ENCODE measurements at regions of chr2 and their contacts with region 1.

Region 1: DNA sequence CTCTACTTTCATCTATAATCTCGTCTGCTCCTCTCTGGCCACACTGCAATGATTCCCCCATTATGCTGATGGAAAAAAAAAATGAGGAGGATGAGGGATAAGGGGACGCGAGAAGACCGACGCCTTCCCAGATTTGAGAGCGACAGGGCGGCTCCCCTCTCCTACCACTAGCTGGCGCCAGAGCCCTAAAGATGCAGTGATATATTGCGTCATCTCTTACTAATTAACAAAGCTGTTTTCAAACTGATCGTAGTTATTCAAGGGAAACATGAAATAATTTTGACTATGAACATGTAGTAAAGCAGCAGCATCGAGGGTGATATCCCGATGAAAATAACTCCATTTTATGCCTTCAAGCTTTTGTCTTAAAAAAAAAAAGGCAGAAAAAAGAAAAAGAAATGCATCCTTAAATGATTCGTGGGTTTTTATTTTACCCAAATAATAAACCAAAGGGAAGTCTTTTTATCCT is 48.0 kb upstream of the HNRNPA3 start:
- DNase-seq: peak; percentile 86
- ATAC-seq: peak; percentile 66
- H3K4me3 ChIP-seq: peak overlapping the region; percentile 38 to 71 (median 50)
- H3K4me3 Mint-ChIP-seq: no peak overlapping the region
- H3K27ac ChIP-seq: peak overlapping the region; percentile 81 to 90
- H3K27ac Mint-ChIP-seq: no peak overlapping the region
- H3K4me1 ChIP-seq: peaks cover 19 to 25% of the 10 kb centered on the region in 2 donors
- H3K4me1 Mint-ChIP-seq: peaks cover 22% of the 10 kb centered on the region
- H3K27me3 ChIP-seq: no peaks in the 10 kb centered on the region
- H3K27me3 Mint-ChIP-seq: peaks cover 4% of the 10 kb centered on the region
- CTCF ChIP-seq: peak; percentile 100

Region 2: DNA sequence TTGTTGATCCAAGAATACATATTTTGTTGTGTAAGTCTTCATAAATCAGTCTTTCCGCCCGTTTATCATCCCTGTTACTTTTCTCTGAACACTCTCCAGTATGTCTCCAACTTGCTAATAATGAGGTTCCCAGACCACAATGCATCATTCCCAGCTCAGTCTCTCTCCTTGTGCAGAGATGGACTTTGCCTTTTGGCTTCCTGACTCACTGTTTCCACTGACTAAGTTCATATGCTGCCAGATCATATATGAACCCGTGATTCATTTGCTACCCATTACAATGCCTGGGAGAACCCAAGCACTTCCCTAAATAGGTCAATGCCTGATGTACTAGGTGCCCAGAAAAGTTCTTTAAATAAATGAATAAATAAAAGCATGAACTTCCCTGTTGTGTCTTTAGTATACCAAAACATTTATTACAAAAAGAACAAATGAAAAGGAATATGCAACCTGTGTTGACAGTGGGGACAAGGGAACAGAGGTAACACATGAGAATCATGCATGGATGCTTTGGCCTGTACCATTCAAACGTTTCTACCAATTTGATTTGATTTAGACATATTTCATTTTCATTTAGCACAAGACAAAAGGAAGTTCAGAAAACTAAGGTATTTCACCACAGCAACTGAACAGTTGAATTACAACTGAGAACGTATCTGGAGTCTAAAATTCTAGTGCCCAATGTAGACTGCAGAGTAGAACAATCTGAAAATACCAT is 167.4 kb before region 1 on chr2:
- CTCF ChIA-PET with region 1: no interaction called
- POLR2A ChIA-PET with region 1: no interaction called
- intact Hi-C with region 1: no loop called
- DNase-seq: peak; percentile 11
- ATAC-seq: no peak
- H3K4me3 ChIP-seq: no peak overlapping the region
- H3K4me3 Mint-ChIP-seq: peak overlapping the region; percentile 26
- H3K27ac ChIP-seq: peak overlapping the region; percentile 34 to 51
- H3K27ac Mint-ChIP-seq: no peak overlapping the region
- H3K4me1 ChIP-seq: peaks cover 8 to 13% of the 10 kb centered on the region in 2 donors
- H3K4me1 Mint-ChIP-seq: peaks cover 14% of the 10 kb centered on the region
- H3K27me3 ChIP-seq: no peaks in the 10 kb centered on the region
- H3K27me3 Mint-ChIP-seq: no peaks in the 10 kb centered on the region
- CTCF ChIP-seq: no peak

Region 3: GRCh38 chr2:177195194-177195593 is 30.6 kb after region 1 on chr2:
- CTCF ChIA-PET with region 1: interaction called, 18 read pairs
- POLR2A ChIA-PET with region 1: no interaction called
- intact Hi-C with region 1: no loop called
- DNase-seq: no peak
- ATAC-seq: no peak
- H3K4me3 ChIP-seq: no peak overlapping the region
- H3K4me3 Mint-ChIP-seq: no peak overlapping the region
- H3K27ac ChIP-seq: no peak overlapping the region
- H3K27ac Mint-ChIP-seq: no peak overlapping the region
- H3K4me1 ChIP-seq: no peaks in the 10 kb centered on the region
- H3K4me1 Mint-ChIP-seq: no peaks in the 10 kb centered on the region
- H3K27me3 ChIP-seq: no peaks in the 10 kb centered on the region
- H3K27me3 Mint-ChIP-seq: no peaks in the 10 kb centered on the region
- CTCF ChIP-seq: no peak

Region 4: GRCh38 chr2:177239932-177240630 is 75.5 kb after region 1 on chr2:
- CTCF ChIA-PET with region 1: interaction called, 12 read pairs
- POLR2A ChIA-PET with region 1: interaction called, 4 read pairs
- intact Hi-C with region 1: no loop called
- DNase-seq: peak; percentile 88
- ATAC-seq: peak; percentile 82
- H3K4me3 ChIP-seq: peak overlapping the region in 1 of 5 experiments; percentile 12
- H3K4me3 Mint-ChIP-seq: peak overlapping the region; percentile 72
- H3K27ac ChIP-seq: peak overlapping the region; percentile 59 to 60
- H3K27ac Mint-ChIP-seq: peak overlapping the region; percentile 82
- H3K4me1 ChIP-seq: peaks cover 48 to 50% of the 10 kb centered on the region in 2 donors
- H3K4me1 Mint-ChIP-seq: peaks cover 71% of the 10 kb centered on the region
- H3K27me3 ChIP-seq: no peaks in the 10 kb centered on the region
- H3K27me3 Mint-ChIP-seq: no peaks in the 10 kb centered on the region
- CTCF ChIP-seq: no peak

Region 5: GRCh38 chr2:177332041-177332991 is 167.7 kb after region 1 on chr2:
- CTCF ChIA-PET with region 1: interaction called, 228 read pairs
- POLR2A ChIA-PET with region 1: interaction called, 6 read pairs
- intact Hi-C with region 1: loop called (anchors 1 kb)
- DNase-seq: peak; percentile 82
- ATAC-seq: peak; percentile 85
- H3K4me3 ChIP-seq: no peak overlapping the region
- H3K4me3 Mint-ChIP-seq: no peak overlapping the region
- H3K27ac ChIP-seq: no peak overlapping the region
- H3K27ac Mint-ChIP-seq: no peak overlapping the region
- H3K4me1 ChIP-seq: peaks cover 4 to 5% of the 10 kb centered on the region in 2 donors
- H3K4me1 Mint-ChIP-seq: peaks cover 8% of the 10 kb centered on the region
- H3K27me3 ChIP-seq: no peaks in the 10 kb centered on the region
- H3K27me3 Mint-ChIP-seq: no peaks in the 10 kb centered on the region
- CTCF ChIP-seq: peak; percentile 77

Region 6: GRCh38 chr2:177419274-177419673 is 254.7 kb after region 1 on chr2:
- CTCF ChIA-PET with region 1: interaction called, 87 read pairs
- POLR2A ChIA-PET with region 1: no interaction called
- intact Hi-C with region 1: loop called (anchors 1 kb)
- DNase-seq: no peak
- ATAC-seq: no peak
- H3K4me3 ChIP-seq: no peak overlapping the region
- H3K4me3 Mint-ChIP-seq: no peak overlapping the region
- H3K27ac ChIP-seq: no peak overlapping the region
- H3K27ac Mint-ChIP-seq: no peak overlapping the region
- H3K4me1 ChIP-seq: no peaks in the 10 kb centered on the region
- H3K4me1 Mint-ChIP-seq: peaks cover 2% of the 10 kb centered on the region
- H3K27me3 ChIP-seq: no peaks in the 10 kb centered on the region
- H3K27me3 Mint-ChIP-seq: no peaks in the 10 kb centered on the region
- CTCF ChIP-seq: no peak

Region 7: DNA sequence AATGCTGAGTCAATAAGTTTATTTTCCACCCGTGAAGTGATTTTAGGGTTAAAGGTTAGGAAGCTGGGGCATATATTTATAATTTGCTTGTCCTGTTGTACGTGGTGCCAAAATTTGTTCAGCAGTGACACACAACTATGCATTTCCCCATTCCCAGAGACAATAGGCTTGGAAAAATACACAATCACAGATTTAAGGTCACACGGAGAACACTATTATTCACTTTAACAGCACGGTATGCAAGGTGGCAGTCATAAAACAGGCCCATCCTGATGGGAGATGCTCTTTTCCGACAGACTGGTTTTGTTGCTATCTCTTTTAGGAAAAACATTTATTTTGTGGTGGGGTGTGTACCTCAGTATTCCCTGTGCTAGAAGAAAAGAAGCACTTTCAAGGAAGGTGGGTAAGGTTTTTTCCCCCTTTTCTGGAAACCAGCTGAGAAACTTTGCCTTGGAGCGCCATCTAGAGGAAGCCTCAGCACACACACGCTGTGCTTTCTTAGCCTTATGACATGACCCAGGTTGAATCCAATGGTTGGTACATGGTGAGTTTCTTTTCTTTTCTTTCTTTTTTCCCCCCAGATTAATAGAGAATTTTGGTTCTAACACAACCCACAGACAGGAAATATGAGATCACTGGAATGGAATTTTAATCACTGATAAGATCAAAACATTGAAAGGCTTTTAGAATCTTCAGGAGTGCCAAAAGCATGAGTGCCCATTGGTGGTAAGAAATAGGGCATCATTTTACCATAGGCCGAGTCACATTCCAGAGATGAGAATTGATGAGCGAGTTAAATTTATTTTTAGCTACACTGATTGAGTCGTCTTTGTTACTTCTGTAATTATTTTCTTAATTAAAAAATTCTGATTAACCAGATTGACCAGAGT is 560.0 kb after region 1 on chr2:
- CTCF ChIA-PET with region 1: interaction called, 32 read pairs
- POLR2A ChIA-PET with region 1: no interaction called
- intact Hi-C with region 1: loop called (anchors 1 kb)
- DNase-seq: peak; percentile 42
- ATAC-seq: peak; percentile 51
- H3K4me3 ChIP-seq: no peak overlapping the region
- H3K4me3 Mint-ChIP-seq: no peak overlapping the region
- H3K27ac ChIP-seq: no peak overlapping the region
- H3K27ac Mint-ChIP-seq: no peak overlapping the region
- H3K4me1 ChIP-seq: no peaks in the 10 kb centered on the region
- H3K4me1 Mint-ChIP-seq: no peaks in the 10 kb centered on the region
- H3K27me3 ChIP-seq: peaks cover 0 to 3% (median 0%) of the 10 kb centered on the region in 4 experiments
- H3K27me3 Mint-ChIP-seq: peaks cover 38% of the 10 kb centered on the region
- CTCF ChIP-seq: peak; percentile 87